ENCODE measurements at regions of chr15 and their contacts with region 1.

Region 1: DNA sequence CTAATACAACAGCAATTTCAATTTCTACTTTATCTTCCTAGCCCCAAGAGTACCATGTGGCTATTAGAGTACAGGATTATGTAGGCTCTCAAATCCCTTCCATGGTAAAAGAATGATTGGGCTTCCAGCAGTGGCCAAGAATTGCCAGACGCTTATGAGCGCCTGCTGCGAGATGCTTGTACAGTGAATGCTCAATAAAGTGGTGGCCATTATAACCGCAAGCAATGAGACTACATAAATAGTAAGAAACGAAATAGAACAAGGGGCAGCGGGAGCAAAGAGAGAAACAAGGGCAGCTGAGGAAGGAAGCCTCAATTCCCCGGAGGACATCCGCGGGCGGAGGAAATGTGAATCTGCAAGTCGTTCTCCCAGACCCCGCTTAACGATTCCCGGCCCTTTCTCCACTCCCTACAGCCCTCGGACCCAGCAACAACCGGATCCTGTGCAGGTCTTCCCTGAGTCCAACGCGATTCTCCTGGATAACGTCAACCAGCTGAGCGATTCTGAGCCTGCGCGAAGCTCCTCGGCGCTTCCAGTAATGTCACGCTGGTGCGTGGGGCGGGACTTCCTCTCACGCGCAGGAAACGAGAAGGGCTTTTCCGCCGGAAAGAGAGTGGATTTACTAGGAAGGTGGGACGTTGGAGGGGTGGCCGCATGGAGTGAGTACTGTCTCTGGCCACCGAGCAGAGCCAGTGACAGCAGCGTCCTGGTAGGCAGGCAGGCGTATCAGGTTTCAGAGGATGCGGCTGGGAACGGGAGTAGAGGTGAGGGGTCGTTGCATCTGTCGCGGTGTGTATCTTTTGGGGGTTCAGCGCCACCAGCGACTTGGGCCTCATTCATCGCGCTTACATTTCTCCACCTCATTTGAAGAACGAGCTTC is 40.5 kb upstream of the AP3B2 start:
- DNase-seq: peak; percentile 91
- H3K4me3 Mint-ChIP-seq: peak overlapping the region; percentile 85
- H3K27ac Mint-ChIP-seq: peak overlapping the region; percentile 83
- H3K4me1 Mint-ChIP-seq: peaks cover 18% of the 10 kb centered on the region
- H3K27me3 Mint-ChIP-seq: no peaks in the 10 kb centered on the region
- CTCF ChIP-seq: no peak

Region 2: DNA sequence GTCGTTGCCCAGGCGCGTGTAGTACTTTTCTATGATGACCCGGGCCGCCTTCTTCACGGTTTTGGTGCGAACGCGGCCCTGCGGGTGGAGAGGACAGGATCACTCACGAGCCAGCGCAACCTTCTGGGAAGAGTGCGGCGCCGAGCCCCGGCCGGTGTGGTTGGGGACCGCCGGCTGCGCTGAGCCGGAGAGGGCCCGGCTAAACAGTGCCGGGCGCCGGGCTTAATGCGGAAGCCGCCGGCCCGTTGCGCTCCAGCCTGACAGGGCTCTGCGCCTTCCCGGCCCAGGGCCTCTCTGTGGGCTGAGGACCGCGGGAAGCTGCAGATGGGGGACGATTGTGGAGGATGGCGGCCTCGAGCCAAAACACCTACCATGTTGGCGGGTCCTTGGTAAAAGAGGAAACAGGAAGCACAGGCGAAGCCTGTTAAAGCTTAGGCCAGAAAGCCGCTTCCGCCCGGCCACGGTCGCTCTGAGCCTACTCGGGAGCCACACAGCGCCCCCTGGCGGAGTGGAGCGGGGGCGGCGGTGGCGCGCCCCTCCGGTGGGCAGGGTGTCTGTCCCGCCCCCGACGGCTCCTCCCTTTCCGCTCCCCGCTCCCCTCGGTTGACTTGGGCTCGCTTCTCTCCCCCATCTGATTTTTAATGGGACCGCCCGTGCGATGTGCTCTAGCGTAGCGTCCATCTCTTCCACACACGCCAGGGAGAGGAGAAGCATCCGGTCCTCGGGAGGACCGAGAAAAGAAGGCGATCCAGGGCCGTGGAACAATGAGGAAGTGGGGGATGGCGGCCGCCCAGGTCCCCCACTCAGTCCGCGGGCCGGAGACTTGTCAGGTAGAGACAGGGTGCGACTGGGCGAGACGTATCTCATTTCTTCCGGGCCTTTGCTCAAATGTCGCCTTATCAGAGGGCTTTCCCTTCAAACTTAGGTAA is 209.9 kb before region 1 on chr15 and contains the start of gene RPS17:
- CTCF ChIA-PET with region 1: interaction called, 7 read pairs
- intact Hi-C with region 1: loop called (anchors 5 kb)
- DNase-seq: peak; percentile 99
- H3K4me3 Mint-ChIP-seq: peak within 1 kb of the TSS; percentile 98
- H3K27ac Mint-ChIP-seq: peak within 1 kb of the TSS; percentile 96
- H3K4me1 Mint-ChIP-seq: peaks cover 41% of the 10 kb centered on the region
- H3K27me3 Mint-ChIP-seq: no peaks in the 10 kb centered on the region
- CTCF ChIP-seq: peak; percentile 97
- total RNA-seq, gene RPS17: 1,584 and 1,695 TPM in 2 replicates

Region 3: GRCh38 chr15:82709421-82710207 is 40.6 kb before region 1 on chr15 and contains the start of gene AP3B2:
- CTCF ChIA-PET with region 1: interaction called, 4 read pairs
- intact Hi-C with region 1: loop called (anchors 5 kb)
- DNase-seq: peak; percentile 87
- H3K4me3 Mint-ChIP-seq: no peak within 1 kb of the TSS
- H3K27ac Mint-ChIP-seq: no peak within 1 kb of the TSS
- H3K4me1 Mint-ChIP-seq: peaks cover 18% of the 10 kb centered on the region
- H3K27me3 Mint-ChIP-seq: no peaks in the 10 kb centered on the region
- CTCF ChIP-seq: no peak
- total RNA-seq, gene AP3B2: 13.1 and 24.7 TPM in 2 replicates

Region 4: GRCh38 chr15:82809404-82810060 is 59.3 kb after region 1 on chr15 and contains the start of gene WHAMM:
- CTCF ChIA-PET with region 1: interaction called, 3 read pairs
- intact Hi-C with region 1: loop called (anchors 2 kb)
- DNase-seq: peak; percentile 99
- H3K4me3 Mint-ChIP-seq: peak within 1 kb of the TSS; percentile 96
- H3K27ac Mint-ChIP-seq: peak within 1 kb of the TSS; percentile 92
- H3K4me1 Mint-ChIP-seq: peaks cover 12% of the 10 kb centered on the region
- H3K27me3 Mint-ChIP-seq: no peaks in the 10 kb centered on the region
- CTCF ChIP-seq: no peak
- total RNA-seq, gene WHAMM: 12.1 and 12.5 TPM in 2 replicates

Region 5: DNA sequence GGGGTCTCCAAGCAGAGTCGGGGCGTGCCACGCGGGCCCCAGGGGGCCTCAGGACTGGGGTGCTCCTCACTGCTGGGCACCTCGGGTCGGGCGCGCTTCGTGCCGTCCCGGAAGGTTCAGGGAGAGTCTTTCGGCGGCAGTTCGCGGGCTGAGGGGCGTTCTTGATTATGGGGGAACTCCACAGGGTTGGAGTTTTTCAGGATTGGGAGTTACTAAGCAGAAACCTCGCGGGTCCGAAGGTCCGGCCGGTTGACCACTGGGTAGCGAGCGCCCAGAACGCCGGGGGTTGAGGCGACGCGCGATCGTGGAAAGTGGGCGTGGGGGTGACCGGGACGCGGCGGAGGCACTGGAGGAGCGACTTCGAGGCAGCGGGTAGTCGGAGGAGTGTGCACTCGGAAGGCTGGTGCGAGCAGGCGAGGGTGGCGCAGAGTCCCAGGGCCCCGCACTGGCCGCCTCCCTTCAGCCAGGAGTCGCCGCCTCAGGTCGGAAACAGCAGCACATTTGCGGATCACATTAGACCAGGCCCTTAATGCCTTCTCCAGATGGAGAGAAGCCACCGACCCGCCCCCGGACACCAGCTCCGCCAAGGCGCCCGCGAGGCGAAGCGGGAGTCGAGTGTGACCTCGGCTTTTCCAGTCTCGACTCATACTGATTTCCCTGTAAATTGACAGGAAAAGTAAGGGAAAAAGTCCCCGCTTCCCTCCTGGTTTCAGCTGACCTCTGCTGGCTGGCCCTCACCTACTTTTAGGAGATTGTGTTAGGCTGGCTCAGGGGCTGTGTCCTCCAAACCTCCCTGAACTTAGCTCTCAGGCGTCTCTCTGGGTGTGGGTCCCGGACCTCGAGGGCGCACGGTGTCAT is 904.4 kb after region 1 on chr15:
- CTCF ChIA-PET with region 1: no interaction called
- intact Hi-C with region 1: no loop called
- DNase-seq: no peak
- H3K4me3 Mint-ChIP-seq: no peak overlapping the region
- H3K27ac Mint-ChIP-seq: no peak overlapping the region
- H3K4me1 Mint-ChIP-seq: peaks cover 13% of the 10 kb centered on the region
- H3K27me3 Mint-ChIP-seq: peaks cover 35% of the 10 kb centered on the region
- CTCF ChIP-seq: no peak